ENCODE measurements at regions of chr1 and their contacts with region 1.

Region 1: GRCh38 chr1:224182866-224183590 is at the start of gene DEGS1:
- DNase-seq: peak; percentile 93 to 100 (median 99)
- ATAC-seq: peak; percentile 92
- H3K4me3 ChIP-seq: peak within 1 kb of the TSS; percentile 82
- H3K27ac ChIP-seq: peak within 1 kb of the TSS; percentile 93
- H3K4me1 ChIP-seq: peaks cover 14 to 31% of the 10 kb centered on the region in 2 experiments; a peak in 4 of 5 replicates
- H3K27me3 ChIP-seq: no peaks in the 10 kb centered on the region
- CTCF ChIP-seq: peak in 2 of 3 experiments; percentile 5 to 11; a peak in 3 of 6 replicates
- EP300 ChIP-seq: 0 out of 2 replicates have a peak, but pooled peaks have one; percentile 2
- POLR2A ChIP-seq: peak; percentile 93
- RAD21 ChIP-seq: peak; percentile 15 to 19; a peak in 2 of 4 replicates
- polyA plus RNA-seq, gene DEGS1: 12.3 to 20.4 TPM

Region 2: GRCh38 chr1:224137518-224137917 is 45.5 kb before region 1 on chr1:
- CTCF ChIA-PET with region 1: no interaction called
- POLR2A ChIA-PET with region 1: no interaction called
- in situ Hi-C with region 1: no loop called
- intact Hi-C with region 1: no loop called
- DNase-seq: no peak
- ATAC-seq: no peak; the same call in 1 of the 3 replicates
- H3K4me3 ChIP-seq: no peak overlapping the region
- H3K27ac ChIP-seq: no peak overlapping the region
- H3K4me1 ChIP-seq: no peaks in the 10 kb centered on the region
- H3K27me3 ChIP-seq: no peaks in the 10 kb centered on the region
- CTCF ChIP-seq: no peak
- EP300 ChIP-seq: no peak
- POLR2A ChIP-seq: no peak
- RAD21 ChIP-seq: no peak

Region 3: DNA sequence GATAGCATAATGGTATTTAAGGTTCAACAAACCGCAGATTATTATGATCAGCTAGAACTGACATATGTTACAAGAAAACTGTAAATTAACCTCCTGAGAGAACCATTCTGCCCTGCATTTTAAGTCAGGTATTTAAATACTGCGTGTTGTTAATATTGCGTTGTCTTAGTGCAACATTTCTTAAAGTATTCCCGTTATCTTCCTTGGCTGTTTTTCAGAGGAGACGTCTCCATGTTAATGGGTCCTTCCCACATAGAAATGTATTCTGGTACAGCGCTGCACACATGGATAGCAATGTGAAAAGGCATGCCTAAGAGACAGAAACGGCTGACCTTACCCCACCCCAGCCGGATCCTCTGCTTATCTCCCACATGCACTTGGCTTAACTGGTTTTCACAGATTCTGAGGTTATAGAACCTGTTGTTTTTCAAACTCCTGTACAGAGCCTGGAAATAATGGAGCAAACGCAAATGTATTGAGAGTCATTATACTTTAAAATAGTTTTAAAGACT is 22.8 kb before region 1 on chr1:
- CTCF ChIA-PET with region 1: no interaction called
- POLR2A ChIA-PET with region 1: interaction called, 5 read pairs
- in situ Hi-C with region 1: no loop called
- intact Hi-C with region 1: loop called (anchors 2 kb)
- DNase-seq: peak; percentile 90 to 96 (median 93)
- ATAC-seq: peak; percentile 97
- H3K4me3 ChIP-seq: no peak overlapping the region
- H3K27ac ChIP-seq: peak overlapping the region; percentile 43; the same call in 2 of the 3 replicates
- H3K4me1 ChIP-seq: peaks cover 4 to 17% of the 10 kb centered on the region in 2 experiments; a peak in 4 of 5 replicates
- H3K27me3 ChIP-seq: no peaks in the 10 kb centered on the region
- CTCF ChIP-seq: no peak; a peak in 1 of 6 replicates
- EP300 ChIP-seq: peak; percentile 98
- POLR2A ChIP-seq: no peak
- RAD21 ChIP-seq: peak in 1 of 2 experiments; percentile 13; a peak in 1 of 4 replicates

Region 4: DNA sequence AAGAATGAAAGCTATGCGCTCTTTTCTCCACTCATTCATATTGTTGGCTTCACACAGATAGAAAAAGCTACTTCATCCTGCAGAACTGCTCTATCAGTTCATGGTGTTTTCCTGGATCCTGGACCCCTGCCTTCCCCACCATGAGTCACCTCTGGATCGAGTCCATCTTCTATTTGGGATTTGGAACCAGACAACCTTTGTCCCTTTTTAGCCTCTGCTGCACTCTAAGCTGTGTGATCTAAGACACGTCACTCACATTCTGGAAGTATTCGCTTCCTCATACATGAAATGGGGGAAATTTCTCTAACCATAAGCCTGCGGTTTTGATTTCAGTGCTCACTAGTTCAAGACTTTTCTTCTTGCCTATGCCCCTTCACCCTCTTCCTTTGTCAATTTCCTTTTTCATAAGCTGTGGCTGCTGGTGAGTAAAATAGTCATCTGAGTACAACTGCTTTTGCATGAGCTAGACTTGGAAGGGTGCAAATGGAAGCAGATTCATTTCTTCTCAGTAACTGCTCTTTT is 14.1 kb before region 1 on chr1:
- CTCF ChIA-PET with region 1: no interaction called
- POLR2A ChIA-PET with region 1: interaction called, 10 read pairs
- in situ Hi-C with region 1: no loop called
- intact Hi-C with region 1: no loop called
- DNase-seq: no peak
- ATAC-seq: no peak
- H3K4me3 ChIP-seq: no peak overlapping the region
- H3K27ac ChIP-seq: no peak overlapping the region
- H3K4me1 ChIP-seq: peaks cover 0 to 4% of the 10 kb centered on the region in 2 experiments; a peak in 2 of 5 replicates
- H3K27me3 ChIP-seq: no peaks in the 10 kb centered on the region
- CTCF ChIP-seq: no peak
- EP300 ChIP-seq: no peak
- POLR2A ChIP-seq: no peak
- RAD21 ChIP-seq: no peak

Region 5: DNA sequence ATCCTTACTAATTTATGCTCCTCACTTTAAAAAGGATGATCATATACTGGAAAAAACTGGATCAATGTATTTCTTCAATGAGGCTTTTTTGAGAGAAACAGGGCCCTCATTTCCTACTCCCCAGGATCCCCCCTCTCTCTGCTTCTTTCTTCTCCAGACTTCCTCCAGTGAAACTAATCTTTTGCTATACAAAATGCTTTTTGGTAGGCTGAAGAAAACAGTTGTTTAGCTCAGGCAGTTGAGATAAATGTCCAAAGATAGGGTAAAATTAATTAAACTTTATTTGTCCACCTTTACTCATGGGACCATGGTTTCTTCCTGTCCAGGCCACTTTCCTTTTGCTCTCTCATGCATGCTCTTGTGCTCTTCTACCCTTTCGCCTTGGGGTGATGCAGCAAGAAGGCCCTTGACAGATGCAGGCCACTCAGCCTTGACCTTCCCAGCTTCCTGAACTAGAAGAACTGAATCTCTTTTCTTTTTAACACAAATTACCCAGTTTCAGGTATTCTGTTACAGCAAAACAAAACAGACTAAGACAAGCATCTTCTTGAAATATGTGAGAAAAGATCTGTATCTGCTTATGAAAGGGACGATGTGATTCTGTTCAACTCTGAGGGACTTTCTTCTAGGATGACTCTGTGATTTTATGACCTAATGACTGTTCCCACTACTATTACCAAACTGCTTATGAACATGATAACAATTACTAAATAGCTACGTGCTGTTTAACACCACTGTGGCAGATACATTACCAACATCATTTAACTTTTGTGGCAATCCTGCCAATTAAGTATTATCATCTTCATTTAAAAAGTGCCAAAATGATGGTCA is 83.3 kb after region 1 on chr1:
- CTCF ChIA-PET with region 1: no interaction called
- POLR2A ChIA-PET with region 1: no interaction called
- in situ Hi-C with region 1: no loop called
- intact Hi-C with region 1: no loop called
- DNase-seq: no peak
- ATAC-seq: no peak
- H3K4me3 ChIP-seq: no peak overlapping the region
- H3K27ac ChIP-seq: no peak overlapping the region
- H3K4me1 ChIP-seq: peaks cover 0 to 13% of the 10 kb centered on the region in 2 experiments; a peak in 2 of 5 replicates
- H3K27me3 ChIP-seq: no peaks in the 10 kb centered on the region
- CTCF ChIP-seq: no peak
- EP300 ChIP-seq: no peak
- POLR2A ChIP-seq: no peak
- RAD21 ChIP-seq: no peak